Gastrocnemius medialis (tissue), 4 donors: ENCODE measurements at regions of chr2 and their contacts with region 1.

Region 1: GRCh38 chr2:197363998-197364538 is 53.5 kb upstream of the ANKRD44 start:
- DNase-seq: no peak
- ATAC-seq: no peak
- H3K4me3 ChIP-seq: no peak overlapping the region
- H3K27ac ChIP-seq: no peak overlapping the region
- H3K4me1 ChIP-seq: peaks cover 5 to 10% of the 10 kb centered on the region in 2 donors
- H3K27me3 ChIP-seq: no peaks in the 10 kb centered on the region
- CTCF ChIP-seq: no peak
- POLR2A ChIP-seq: no peak

Region 2: DNA sequence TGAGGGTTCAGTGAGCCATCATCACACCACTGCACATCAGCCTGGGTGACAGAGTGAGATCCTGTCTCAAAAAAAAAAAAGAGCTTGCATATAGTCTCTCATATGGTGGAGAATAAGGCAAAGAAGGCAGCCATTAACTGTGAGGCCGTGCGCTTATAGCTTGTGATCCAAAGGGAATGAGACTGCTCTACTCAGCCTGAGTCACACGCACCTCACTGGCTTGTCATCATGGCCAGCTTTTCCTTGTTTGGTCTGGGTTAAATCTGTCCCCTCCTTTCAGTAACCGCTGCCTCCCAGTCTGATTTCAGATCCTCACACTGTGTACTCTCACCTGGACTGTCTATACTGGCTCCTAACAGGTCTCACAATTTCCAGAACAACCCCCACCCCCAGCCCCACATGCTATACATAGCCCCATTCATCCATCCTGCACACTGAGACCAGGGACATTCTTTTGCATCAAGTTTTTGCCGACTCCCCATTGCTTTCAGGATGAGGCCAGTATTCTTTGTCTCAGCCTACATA is 18.2 kb before region 1 on chr2:
- in situ Hi-C with region 1: no loop called
- intact Hi-C with region 1: loop called (anchors 1 kb)
- DNase-seq: peak; percentile 28 to 32
- ATAC-seq: peak; percentile 26 to 75
- H3K4me3 ChIP-seq: no peak overlapping the region
- H3K27ac ChIP-seq: peak overlapping the region in 3 of 4 donors; percentile 30 to 86 (median 82)
- H3K4me1 ChIP-seq: peaks cover 0 to 14% of the 10 kb centered on the region in 2 donors
- H3K27me3 ChIP-seq: no peaks in the 10 kb centered on the region
- CTCF ChIP-seq: no peak
- POLR2A ChIP-seq: no peak

Region 3: GRCh38 chr2:197425550-197425949 is 61.5 kb after region 1 on chr2:
- in situ Hi-C with region 1: no loop called
- intact Hi-C with region 1: loop called (anchors 2 kb)
- DNase-seq: no peak
- ATAC-seq: no peak
- H3K4me3 ChIP-seq: no peak overlapping the region
- H3K27ac ChIP-seq: peak overlapping the region in 1 of 4 donors; percentile 21
- H3K4me1 ChIP-seq: peaks cover 38 to 58% of the 10 kb centered on the region in 2 donors
- H3K27me3 ChIP-seq: no peaks in the 10 kb centered on the region
- CTCF ChIP-seq: no peak
- POLR2A ChIP-seq: no peak